GM12878 (cell line): ENCODE measurements at regions of chr1 and their contacts with region 1.

Region 1: GRCh38 chr1:69109277-69109676 is 458.4 kb upstream of the LRRC7 start:
- DNase-seq: no peak
- ATAC-seq: no peak
- H3K4me3 ChIP-seq: no peak overlapping the region
- H3K27ac ChIP-seq: no peak overlapping the region
- H3K4me1 ChIP-seq: no peaks in the 10 kb centered on the region
- H3K27me3 ChIP-seq: no peaks in the 10 kb centered on the region
- CTCF ChIP-seq: no peak
- EP300 ChIP-seq: no peak
- POLR2A ChIP-seq: no peak
- RAD21 ChIP-seq: no peak

Region 2: DNA sequence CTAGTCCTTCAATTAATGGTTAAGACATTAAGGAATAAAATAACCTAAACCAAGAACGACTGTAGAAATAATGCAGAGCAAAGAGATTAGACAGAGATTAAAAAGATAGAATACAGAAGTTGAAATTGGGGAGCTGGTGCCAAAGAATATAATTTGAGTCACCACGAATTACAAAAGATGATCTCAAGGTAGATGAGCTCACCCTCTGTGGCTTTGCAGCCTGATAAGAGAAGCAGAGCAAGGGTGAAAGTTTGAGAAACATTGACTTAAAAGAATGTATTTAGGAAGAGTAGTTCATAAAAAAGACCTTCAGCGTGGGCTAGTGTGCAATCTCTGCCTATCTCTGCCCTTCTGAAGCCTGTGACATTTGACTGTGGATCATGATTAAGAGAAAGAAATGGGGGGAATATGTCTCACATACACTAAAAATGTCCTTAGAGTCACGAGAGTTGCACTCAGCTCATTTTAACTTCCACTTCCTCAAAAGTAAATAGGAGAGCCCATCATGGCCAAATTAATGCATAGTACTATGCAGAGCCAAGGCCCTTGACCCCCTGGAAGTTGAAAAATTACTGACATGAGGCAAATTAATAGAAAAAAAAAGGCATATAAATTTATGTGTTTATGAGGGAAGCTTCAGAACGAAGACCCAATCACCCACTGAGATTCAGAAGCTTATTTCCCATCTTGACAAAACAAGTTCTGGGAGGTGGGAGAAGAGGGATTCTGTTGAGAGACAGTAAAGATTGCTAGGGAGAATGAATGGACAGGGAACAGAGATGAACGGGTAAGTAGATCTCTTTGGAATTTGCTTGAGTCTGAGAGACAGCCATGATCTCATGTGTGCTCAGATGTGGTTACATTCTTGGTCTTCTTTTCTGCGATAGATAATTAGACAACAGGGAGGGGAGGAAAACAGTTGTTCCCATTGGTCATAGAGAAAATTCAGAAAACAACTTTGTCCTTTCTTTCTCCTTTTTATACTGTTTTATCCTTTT is 63.0 kb after region 1 on chr1:
- CTCF ChIA-PET with region 1: no interaction called
- POLR2A ChIA-PET with region 1: no interaction called
- RAD21 ChIA-PET with region 1: no interaction called
- SMC1A ChIA-PET with region 1: no interaction called
- in situ Hi-C with region 1: no loop called
- intact Hi-C with region 1: loop called (anchors 10 kb)
- DNase-seq: no peak
- ATAC-seq: peak; percentile 61
- H3K4me3 ChIP-seq: no peak overlapping the region
- H3K27ac ChIP-seq: no peak overlapping the region
- H3K4me1 ChIP-seq: no peaks in the 10 kb centered on the region
- H3K27me3 ChIP-seq: no peaks in the 10 kb centered on the region
- CTCF ChIP-seq: no peak
- EP300 ChIP-seq: no peak
- POLR2A ChIP-seq: no peak
- RAD21 ChIP-seq: no peak

Region 3: DNA sequence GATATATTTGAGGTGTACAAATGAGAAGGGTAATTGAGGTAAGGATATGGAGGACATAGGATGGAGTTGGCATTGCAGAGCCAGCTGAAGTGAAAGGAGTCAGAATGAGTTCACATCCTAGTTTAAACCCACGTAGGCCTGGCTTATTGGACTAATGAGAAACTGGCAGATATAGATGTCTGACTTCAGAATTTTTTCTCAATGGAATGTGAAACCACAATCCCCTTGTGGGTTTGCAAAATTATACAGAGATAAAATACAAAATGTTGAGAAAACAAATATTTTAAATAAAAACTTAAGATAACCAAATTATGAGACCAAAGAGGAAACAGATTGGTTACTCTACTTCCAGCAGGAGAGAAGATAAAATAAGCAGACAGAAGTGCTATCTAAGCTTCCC is 181.0 kb after region 1 on chr1:
- CTCF ChIA-PET with region 1: no interaction called
- POLR2A ChIA-PET with region 1: no interaction called
- RAD21 ChIA-PET with region 1: no interaction called
- SMC1A ChIA-PET with region 1: no interaction called
- in situ Hi-C with region 1: no loop called
- intact Hi-C with region 1: no loop called
- DNase-seq: no peak
- ATAC-seq: no peak
- H3K4me3 ChIP-seq: no peak overlapping the region
- H3K27ac ChIP-seq: no peak overlapping the region
- H3K4me1 ChIP-seq: no peaks in the 10 kb centered on the region
- H3K27me3 ChIP-seq: no peaks in the 10 kb centered on the region
- CTCF ChIP-seq: no peak
- EP300 ChIP-seq: no peak
- POLR2A ChIP-seq: no peak
- RAD21 ChIP-seq: no peak

Region 4: GRCh38 chr1:69513621-69514020 is 404.3 kb after region 1 on chr1:
- CTCF ChIA-PET with region 1: no interaction called
- POLR2A ChIA-PET with region 1: no interaction called
- RAD21 ChIA-PET with region 1: no interaction called
- SMC1A ChIA-PET with region 1: no interaction called
- in situ Hi-C with region 1: no loop called
- intact Hi-C with region 1: no loop called
- DNase-seq: no peak
- ATAC-seq: no peak
- H3K4me3 ChIP-seq: no peak overlapping the region
- H3K27ac ChIP-seq: no peak overlapping the region
- H3K4me1 ChIP-seq: no peaks in the 10 kb centered on the region
- H3K27me3 ChIP-seq: no peaks in the 10 kb centered on the region
- CTCF ChIP-seq: no peak
- EP300 ChIP-seq: no peak
- POLR2A ChIP-seq: no peak
- RAD21 ChIP-seq: no peak